Activated T-helper 1 cell treated with anti-CD3 and anti-CD28 coated beads, Interleukin-12 subunit alpha, Interleukin-12 subunit beta, Interleukin-2, Interleukin-4 antibody, amounts not matched to agents 30 ng/mL and 10 ng/mL and 1 ng/mL, durations not matched to agents 14 hours and 24 hours and 36 hours (primary cell): ENCODE measurements at regions of chr5 and their contacts with region 1.

Region 1: GRCh38 chr5:148805326-148806290 is 20.8 kb upstream of the ADRB2 start:
- DNase-seq: no peak
- H3K4me3 Mint-ChIP-seq: peak overlapping the region; percentile 60
- H3K27ac Mint-ChIP-seq: peak overlapping the region; percentile 72
- H3K4me1 Mint-ChIP-seq: peaks cover 64% of the 10 kb centered on the region
- H3K27me3 Mint-ChIP-seq: no peaks in the 10 kb centered on the region

Region 2: GRCh38 chr5:148186248-148186996 is 619.2 kb before region 1 on chr5:
- intact Hi-C with region 1: loop called (anchors 5 kb)
- DNase-seq: no peak
- H3K4me3 Mint-ChIP-seq: peak overlapping the region; percentile 7
- H3K27ac Mint-ChIP-seq: peak overlapping the region; percentile 52
- H3K4me1 Mint-ChIP-seq: peaks cover 24% of the 10 kb centered on the region
- H3K27me3 Mint-ChIP-seq: no peaks in the 10 kb centered on the region

Region 3: DNA sequence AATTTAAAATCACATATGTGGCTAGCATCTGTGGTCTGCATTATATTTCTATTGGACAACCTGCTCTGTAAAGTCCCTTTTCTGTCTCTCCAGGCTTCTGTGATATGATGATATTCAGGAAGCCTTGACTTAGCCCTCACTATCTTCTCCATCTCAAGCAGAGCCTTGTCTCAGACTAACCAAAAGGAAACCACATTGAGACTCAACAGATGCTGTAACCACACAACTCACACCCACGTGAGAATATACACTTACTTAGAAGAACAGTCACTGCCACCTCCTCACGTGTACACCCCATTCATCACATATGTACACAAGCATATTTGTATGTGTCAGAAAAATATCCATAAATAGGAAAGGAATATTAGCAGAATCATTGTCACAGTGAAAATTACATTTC is 184.9 kb before region 1 on chr5:
- intact Hi-C with region 1: loop called (anchors 5 kb)
- DNase-seq: peak; percentile 48
- H3K4me3 Mint-ChIP-seq: no peak overlapping the region
- H3K27ac Mint-ChIP-seq: peak overlapping the region; percentile 28
- H3K4me1 Mint-ChIP-seq: peaks cover 36% of the 10 kb centered on the region
- H3K27me3 Mint-ChIP-seq: peaks cover 24% of the 10 kb centered on the region

Region 4: GRCh38 chr5:148708854-148709253 is 96.8 kb before region 1 on chr5:
- intact Hi-C with region 1: loop called (anchors 1 kb)
- DNase-seq: no peak
- H3K4me3 Mint-ChIP-seq: no peak overlapping the region
- H3K27ac Mint-ChIP-seq: no peak overlapping the region
- H3K4me1 Mint-ChIP-seq: peaks cover 8% of the 10 kb centered on the region
- H3K27me3 Mint-ChIP-seq: no peaks in the 10 kb centered on the region

Region 5: GRCh38 chr5:148791334-148791667 is 14.3 kb before region 1 on chr5:
- intact Hi-C with region 1: loop called (anchors 1 kb)
- DNase-seq: no peak
- H3K4me3 Mint-ChIP-seq: no peak overlapping the region
- H3K27ac Mint-ChIP-seq: peak overlapping the region; percentile 56
- H3K4me1 Mint-ChIP-seq: peaks cover 31% of the 10 kb centered on the region
- H3K27me3 Mint-ChIP-seq: peaks cover 17% of the 10 kb centered on the region

Region 6: GRCh38 chr5:148826053-148826738 is 20.6 kb after region 1 on chr5 and contains the start of gene ADRB2:
- intact Hi-C with region 1: loop called (anchors 1 kb)
- DNase-seq: peak; percentile 86
- H3K4me3 Mint-ChIP-seq: peak within 1 kb of the TSS; percentile 89
- H3K27ac Mint-ChIP-seq: peak within 1 kb of the TSS; percentile 75
- H3K4me1 Mint-ChIP-seq: peaks cover 34% of the 10 kb centered on the region
- H3K27me3 Mint-ChIP-seq: peaks cover 63% of the 10 kb centered on the region
- total RNA-seq, gene ADRB2: 0.83 and 0.93 TPM in 2 replicates

Region 7: DNA sequence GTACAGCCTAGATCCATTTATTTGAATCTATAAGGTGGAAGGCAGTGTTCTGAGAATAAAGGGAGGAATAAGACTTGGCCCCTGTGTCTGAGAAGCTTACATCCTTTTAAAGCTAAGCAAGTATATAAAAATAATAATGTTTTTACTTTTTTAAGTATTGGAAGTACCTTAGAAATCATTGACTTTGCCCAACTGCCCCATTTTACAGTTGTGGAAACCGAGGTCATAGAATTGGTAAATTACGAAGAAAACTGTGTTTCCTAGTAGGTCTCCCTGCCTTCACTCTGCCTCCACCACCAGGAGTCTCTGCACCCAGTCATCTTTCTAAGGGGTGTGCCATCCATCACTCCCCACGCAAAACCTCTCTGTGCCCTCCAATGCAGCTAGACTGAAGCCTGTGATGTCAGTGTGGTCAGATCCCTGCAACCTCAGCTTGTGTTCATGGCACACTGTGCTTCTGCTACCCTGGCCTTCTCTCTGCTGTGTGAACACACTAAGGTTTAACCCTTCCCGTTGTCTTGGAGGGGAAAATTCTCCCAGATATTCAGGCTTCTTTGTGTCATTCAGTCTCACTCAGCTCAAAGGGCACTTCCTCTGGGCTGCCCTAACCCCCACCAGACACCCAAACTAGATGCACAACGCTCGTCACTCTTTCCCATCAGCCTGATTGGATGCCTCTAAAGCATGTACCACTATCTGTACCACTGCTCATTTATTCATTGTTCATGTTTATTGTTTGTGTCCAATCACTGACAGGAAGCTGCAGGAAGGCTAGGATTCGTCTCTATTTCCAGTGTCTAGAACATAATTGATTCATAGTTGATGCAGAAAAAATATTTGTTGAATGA is 39.0 kb after region 1 on chr5:
- intact Hi-C with region 1: no loop called
- DNase-seq: no peak
- H3K4me3 Mint-ChIP-seq: no peak overlapping the region
- H3K27ac Mint-ChIP-seq: no peak overlapping the region
- H3K4me1 Mint-ChIP-seq: peaks cover 29% of the 10 kb centered on the region
- H3K27me3 Mint-ChIP-seq: peaks cover 11% of the 10 kb centered on the region

Region 8: DNA sequence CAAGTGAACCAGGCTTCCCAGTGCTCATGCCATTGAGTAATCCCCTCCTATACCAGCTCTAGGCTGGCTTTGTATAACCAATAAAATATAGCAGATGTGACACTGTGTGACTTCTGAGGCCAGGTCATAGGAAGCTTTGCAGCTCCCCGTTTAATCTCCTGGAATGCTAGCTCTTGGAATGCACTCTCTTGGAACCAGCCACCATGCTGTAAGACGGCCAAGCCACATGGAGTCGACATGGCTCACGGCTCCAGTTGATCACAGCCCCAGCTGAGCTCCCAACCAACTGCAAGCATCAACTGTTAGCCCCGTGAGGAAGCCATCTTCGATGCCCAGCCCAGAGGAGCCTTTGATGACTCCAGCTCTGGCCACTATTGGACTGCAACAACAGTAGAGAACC is 182.7 kb after region 1 on chr5:
- intact Hi-C with region 1: no loop called
- DNase-seq: no peak
- H3K4me3 Mint-ChIP-seq: no peak overlapping the region
- H3K27ac Mint-ChIP-seq: no peak overlapping the region
- H3K4me1 Mint-ChIP-seq: no peaks in the 10 kb centered on the region
- H3K27me3 Mint-ChIP-seq: peaks cover 22% of the 10 kb centered on the region

Region 9: GRCh38 chr5:149117970-149118369 is 312.4 kb after region 1 on chr5:
- intact Hi-C with region 1: no loop called
- DNase-seq: no peak
- H3K4me3 Mint-ChIP-seq: no peak overlapping the region
- H3K27ac Mint-ChIP-seq: no peak overlapping the region
- H3K4me1 Mint-ChIP-seq: no peaks in the 10 kb centered on the region
- H3K27me3 Mint-ChIP-seq: peaks cover 23% of the 10 kb centered on the region

Region 10: GRCh38 chr5:149357370-149358293 is 552.0 kb after region 1 on chr5 and contains the start of gene PCYOX1L:
- intact Hi-C with region 1: loop called (anchors 5 kb)
- DNase-seq: peak; percentile 97
- H3K4me3 Mint-ChIP-seq: peak within 1 kb of the TSS; percentile 93
- H3K27ac Mint-ChIP-seq: peak within 1 kb of the TSS; percentile 84
- H3K4me1 Mint-ChIP-seq: peaks cover 67% of the 10 kb centered on the region
- H3K27me3 Mint-ChIP-seq: no peaks in the 10 kb centered on the region
- total RNA-seq, gene PCYOX1L: 21.9 and 23.4 TPM in 2 replicates